MCF 10A (cell line): ENCODE measurements at regions of chr1 and their contacts with region 1.

Region 1: GRCh38 chr1:165257969-165258459 is 98.5 kb downstream of the LMX1A start:
- DNase-seq: peak; percentile 97
- H3K4me3 Mint-ChIP-seq: no peak overlapping the region
- H3K27ac Mint-ChIP-seq: no peak overlapping the region
- H3K4me1 Mint-ChIP-seq: peaks cover 11% of the 10 kb centered on the region
- H3K27me3 Mint-ChIP-seq: peaks cover 45% of the 10 kb centered on the region
- CTCF ChIP-seq: peak; percentile 94

Region 2: DNA sequence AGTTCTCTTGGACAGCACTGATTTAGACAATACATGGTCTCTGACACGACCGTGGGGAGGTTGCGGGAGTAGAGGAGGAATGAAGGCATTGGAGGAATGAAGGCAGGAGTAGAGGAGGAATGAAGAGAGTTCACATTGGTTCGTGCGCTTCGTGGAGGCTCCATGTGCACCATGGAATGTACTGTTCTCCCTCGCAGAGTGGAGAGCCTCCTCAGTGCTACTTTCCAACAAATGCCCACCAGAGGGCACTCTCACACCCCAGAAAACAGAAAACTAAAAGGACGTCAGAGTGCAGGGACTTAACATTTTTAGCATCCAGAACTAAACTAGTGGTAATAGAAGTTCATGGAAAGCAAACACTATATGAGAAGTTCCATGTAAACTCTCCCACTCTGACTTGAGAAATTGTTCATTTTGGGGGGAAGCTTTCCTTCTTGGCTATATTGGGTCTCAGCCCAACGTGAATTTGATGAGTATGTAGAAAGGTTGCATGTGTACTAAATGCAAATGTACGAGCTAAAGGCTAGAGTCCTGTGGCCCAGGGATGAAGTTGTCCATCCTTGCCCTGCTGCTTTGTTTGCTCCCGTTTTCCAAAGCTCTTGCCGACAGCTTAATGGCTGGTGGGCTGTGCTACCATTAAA is 113.1 kb before region 1 on chr1:
- CTCF ChIA-PET with region 1: interaction called, 23 read pairs
- POLR2A ChIA-PET with region 1: no interaction called
- intact Hi-C with region 1: no loop called
- DNase-seq: peak; percentile 81
- H3K4me3 Mint-ChIP-seq: no peak overlapping the region
- H3K27ac Mint-ChIP-seq: no peak overlapping the region
- H3K4me1 Mint-ChIP-seq: peaks cover 6% of the 10 kb centered on the region
- H3K27me3 Mint-ChIP-seq: peaks cover 52% of the 10 kb centered on the region
- CTCF ChIP-seq: peak; percentile 91

Region 3: DNA sequence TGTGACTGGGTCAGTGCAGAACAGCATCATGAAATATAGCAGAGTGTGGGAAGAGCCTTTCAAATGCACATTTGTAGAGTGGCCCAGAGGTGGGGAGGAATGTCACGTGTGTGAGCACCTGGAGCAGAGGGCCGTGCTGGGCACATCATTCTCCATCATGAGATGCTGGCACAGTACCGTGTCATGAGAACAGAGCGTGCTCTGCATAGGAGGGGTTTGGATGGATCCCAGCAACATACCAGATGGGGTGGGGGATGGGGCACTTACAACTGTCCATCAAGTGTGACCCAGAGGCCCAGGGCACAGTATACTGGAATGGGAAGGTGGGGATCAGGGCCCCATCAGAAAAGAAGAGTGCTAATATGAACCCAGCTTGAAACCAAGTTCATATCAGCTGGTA is 83.5 kb before region 1 on chr1:
- CTCF ChIA-PET with region 1: interaction called, 12 read pairs
- POLR2A ChIA-PET with region 1: no interaction called
- intact Hi-C with region 1: no loop called
- DNase-seq: no peak
- H3K4me3 Mint-ChIP-seq: no peak overlapping the region
- H3K27ac Mint-ChIP-seq: no peak overlapping the region
- H3K4me1 Mint-ChIP-seq: no peaks in the 10 kb centered on the region
- H3K27me3 Mint-ChIP-seq: no peaks in the 10 kb centered on the region
- CTCF ChIP-seq: no peak

Region 4: DNA sequence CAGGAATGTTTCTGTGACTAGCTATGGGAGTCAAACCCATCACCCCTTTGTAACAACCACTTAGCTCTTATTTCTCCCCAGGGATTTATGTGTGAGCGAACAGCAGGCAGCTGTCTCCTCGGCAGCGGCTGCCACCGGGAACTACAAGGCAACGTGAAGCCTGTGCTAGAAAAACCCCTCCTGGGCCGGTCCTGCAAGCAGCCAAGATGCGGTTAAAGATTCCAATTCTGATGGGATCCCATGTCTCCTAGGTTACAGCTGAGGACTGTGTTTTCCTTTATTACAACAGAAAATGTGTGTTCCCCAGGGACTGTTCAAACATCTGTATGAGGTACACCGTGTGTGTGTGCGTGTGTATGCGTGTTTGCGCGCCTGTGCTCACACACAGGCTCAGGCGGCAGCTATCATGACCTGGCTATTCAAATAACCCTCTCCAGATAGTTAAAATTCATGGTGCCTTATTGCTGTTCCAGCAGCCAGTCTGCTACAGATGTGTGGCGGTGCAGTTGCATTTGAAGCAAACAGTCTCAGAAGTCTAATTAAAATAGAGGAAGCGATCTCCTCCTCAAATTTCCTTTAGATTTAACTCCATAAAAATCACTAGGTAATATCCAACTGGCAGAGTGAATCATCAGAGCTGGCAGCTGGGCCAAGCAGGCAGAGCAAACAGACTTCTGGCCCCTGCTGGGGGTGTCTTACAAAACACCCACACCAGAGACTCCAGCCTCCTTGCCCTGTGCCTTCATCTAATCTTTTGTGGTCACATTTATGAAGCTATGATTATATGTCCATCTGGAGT is 30.5 kb after region 1 on chr1:
- CTCF ChIA-PET with region 1: interaction called, 67 read pairs
- POLR2A ChIA-PET with region 1: interaction called, 3 read pairs
- intact Hi-C with region 1: no loop called
- DNase-seq: peak; percentile 64
- H3K4me3 Mint-ChIP-seq: no peak overlapping the region
- H3K27ac Mint-ChIP-seq: no peak overlapping the region
- H3K4me1 Mint-ChIP-seq: no peaks in the 10 kb centered on the region
- H3K27me3 Mint-ChIP-seq: peaks cover 10% of the 10 kb centered on the region
- CTCF ChIP-seq: no peak

Region 5: DNA sequence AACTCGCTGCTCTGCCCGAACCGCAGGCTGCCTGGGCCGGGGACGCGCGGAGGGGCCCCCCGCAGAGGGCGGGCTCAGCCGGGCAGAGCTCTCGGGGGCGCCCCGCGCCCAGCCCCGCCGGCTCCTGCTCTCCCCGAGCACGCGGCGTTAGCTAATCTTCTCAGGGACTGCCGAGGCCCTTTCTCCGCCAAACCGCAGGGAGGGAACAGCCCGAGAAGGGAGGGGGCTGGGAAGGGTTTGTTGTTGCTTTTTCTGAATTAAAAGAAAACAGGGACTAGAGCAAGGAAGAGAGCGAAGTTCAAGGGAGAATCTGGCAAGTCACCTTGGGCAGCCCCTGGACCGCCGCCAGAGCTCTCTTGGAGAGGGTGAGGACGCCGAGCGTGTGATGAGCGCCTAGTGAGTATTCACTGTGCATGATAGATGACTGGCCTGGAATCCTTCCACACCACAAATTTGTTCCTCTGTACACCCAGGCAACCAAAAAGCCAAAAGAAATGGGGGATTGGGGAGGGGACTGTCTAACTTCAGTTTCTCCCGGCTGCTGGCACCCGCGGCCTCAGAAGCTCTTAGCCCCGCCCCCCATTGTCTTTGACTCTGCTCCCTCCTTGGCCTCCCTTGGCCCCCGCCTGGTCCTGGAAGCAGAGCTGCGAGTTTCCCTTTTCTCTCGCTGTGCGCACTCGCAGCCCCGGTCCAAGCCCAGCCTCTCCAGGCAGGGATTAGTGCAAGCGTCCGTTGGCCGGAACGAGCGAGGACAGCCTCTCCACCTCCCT is 118.2 kb after region 1 on chr1:
- CTCF ChIA-PET with region 1: interaction called, 536 read pairs
- POLR2A ChIA-PET with region 1: no interaction called
- intact Hi-C with region 1: no loop called
- DNase-seq: peak; percentile 99
- H3K4me3 Mint-ChIP-seq: peak overlapping the region; percentile 63
- H3K27ac Mint-ChIP-seq: peak overlapping the region; percentile 71
- H3K4me1 Mint-ChIP-seq: peaks cover 20% of the 10 kb centered on the region
- H3K27me3 Mint-ChIP-seq: peaks cover 18% of the 10 kb centered on the region
- CTCF ChIP-seq: no peak

Region 6: DNA sequence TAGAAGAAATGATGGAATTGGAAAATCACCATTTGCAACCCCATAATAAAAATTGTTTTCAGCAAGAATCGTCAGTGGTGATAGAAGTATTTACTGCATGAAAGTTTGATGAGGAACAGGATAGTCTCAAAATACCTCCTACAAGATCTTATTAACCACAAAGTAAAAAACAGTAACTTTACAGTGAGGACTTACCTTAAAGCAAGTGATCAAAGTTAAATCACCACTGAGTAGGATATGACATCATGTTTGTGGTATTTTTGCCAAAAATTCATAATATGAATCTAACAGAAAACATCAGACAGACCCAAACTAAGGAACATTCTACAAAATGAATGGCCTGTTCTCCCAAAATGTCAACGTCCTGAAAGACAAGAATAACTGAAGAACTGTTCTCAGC is 420.5 kb after region 1 on chr1:
- CTCF ChIA-PET with region 1: no interaction called
- POLR2A ChIA-PET with region 1: no interaction called
- intact Hi-C with region 1: no loop called
- DNase-seq: no peak
- H3K4me3 Mint-ChIP-seq: no peak overlapping the region
- H3K27ac Mint-ChIP-seq: no peak overlapping the region
- H3K4me1 Mint-ChIP-seq: peaks cover 6% of the 10 kb centered on the region
- H3K27me3 Mint-ChIP-seq: no peaks in the 10 kb centered on the region
- CTCF ChIP-seq: no peak